ENCODE measurements at regions of chr1 and their contacts with region 1.

Region 1: GRCh38 chr1:4309676-4310320 is 344.6 kb upstream of the AJAP1 start:
- DNase-seq: peak; percentile 92
- H3K4me3 ChIP-seq: peak overlapping the region; percentile 38
- H3K27ac ChIP-seq: peak overlapping the region; percentile 65
- H3K4me1 ChIP-seq: peaks cover 54% of the 10 kb centered on the region
- CTCF ChIP-seq: no peak

Region 2: GRCh38 chr1:4172644-4173599 is 136.9 kb before region 1 on chr1:
- CTCF ChIA-PET with region 1: no interaction called
- POLR2A ChIA-PET with region 1: no interaction called
- intact Hi-C with region 1: loop called (anchors 2 kb)
- DNase-seq: peak; percentile 84
- H3K4me3 ChIP-seq: no peak overlapping the region
- H3K27ac ChIP-seq: no peak overlapping the region
- H3K4me1 ChIP-seq: peaks cover 23% of the 10 kb centered on the region
- CTCF ChIP-seq: peak; percentile 80

Region 3: GRCh38 chr1:4344065-4344732 is 34.4 kb after region 1 on chr1:
- CTCF ChIA-PET with region 1: no interaction called
- POLR2A ChIA-PET with region 1: no interaction called
- intact Hi-C with region 1: loop called (anchors 1 kb)
- DNase-seq: peak; percentile 85
- H3K4me3 ChIP-seq: peak overlapping the region; percentile 32
- H3K27ac ChIP-seq: peak overlapping the region; percentile 53
- H3K4me1 ChIP-seq: peaks cover 15% of the 10 kb centered on the region
- CTCF ChIP-seq: no peak

Region 4: GRCh38 chr1:4494558-4494957 is 184.8 kb after region 1 on chr1:
- CTCF ChIA-PET with region 1: no interaction called
- POLR2A ChIA-PET with region 1: no interaction called
- intact Hi-C with region 1: loop called (anchors 5 kb)
- DNase-seq: peak; percentile 37
- H3K4me3 ChIP-seq: no peak overlapping the region
- H3K27ac ChIP-seq: no peak overlapping the region
- H3K4me1 ChIP-seq: peaks cover 68% of the 10 kb centered on the region
- CTCF ChIP-seq: peak; percentile 45; the same call in 1 of the 2 replicates

Region 5: GRCh38 chr1:5223206-5223605 is 913.4 kb after region 1 on chr1:
- CTCF ChIA-PET with region 1: no interaction called
- POLR2A ChIA-PET with region 1: no interaction called
- intact Hi-C with region 1: loop called (anchors 10 kb)
- DNase-seq: no peak
- H3K4me3 ChIP-seq: no peak overlapping the region
- H3K27ac ChIP-seq: peak overlapping the region; percentile 99
- H3K4me1 ChIP-seq: peaks cover 71% of the 10 kb centered on the region
- CTCF ChIP-seq: no peak

Measured in OCI-LY7 (cell line).